CD8-positive, alpha-beta T cell (primary cell): ENCODE measurements at regions of chr1 and their contacts with region 1.

Region 1: GRCh38 chr1:204806943-204807687 is 63.5 kb upstream of the NFASC start:
- DNase-seq: peak; percentile 69 to 90 (median 83)
- ATAC-seq: peak; percentile 96
- H3K4me3 ChIP-seq: peak overlapping the region; percentile 53 to 59
- H3K4me3 Mint-ChIP-seq: peak overlapping the region; percentile 88
- H3K27ac ChIP-seq: no peak overlapping the region
- H3K27ac Mint-ChIP-seq: no peak overlapping the region
- H3K4me1 ChIP-seq: peaks cover 12% of the 10 kb centered on the region
- H3K4me1 Mint-ChIP-seq: peaks cover 20% of the 10 kb centered on the region
- H3K27me3 ChIP-seq: no peaks in the 10 kb centered on the region
- H3K27me3 Mint-ChIP-seq: no peaks in the 10 kb centered on the region
- CTCF ChIP-seq: peak; percentile 100

Region 2: DNA sequence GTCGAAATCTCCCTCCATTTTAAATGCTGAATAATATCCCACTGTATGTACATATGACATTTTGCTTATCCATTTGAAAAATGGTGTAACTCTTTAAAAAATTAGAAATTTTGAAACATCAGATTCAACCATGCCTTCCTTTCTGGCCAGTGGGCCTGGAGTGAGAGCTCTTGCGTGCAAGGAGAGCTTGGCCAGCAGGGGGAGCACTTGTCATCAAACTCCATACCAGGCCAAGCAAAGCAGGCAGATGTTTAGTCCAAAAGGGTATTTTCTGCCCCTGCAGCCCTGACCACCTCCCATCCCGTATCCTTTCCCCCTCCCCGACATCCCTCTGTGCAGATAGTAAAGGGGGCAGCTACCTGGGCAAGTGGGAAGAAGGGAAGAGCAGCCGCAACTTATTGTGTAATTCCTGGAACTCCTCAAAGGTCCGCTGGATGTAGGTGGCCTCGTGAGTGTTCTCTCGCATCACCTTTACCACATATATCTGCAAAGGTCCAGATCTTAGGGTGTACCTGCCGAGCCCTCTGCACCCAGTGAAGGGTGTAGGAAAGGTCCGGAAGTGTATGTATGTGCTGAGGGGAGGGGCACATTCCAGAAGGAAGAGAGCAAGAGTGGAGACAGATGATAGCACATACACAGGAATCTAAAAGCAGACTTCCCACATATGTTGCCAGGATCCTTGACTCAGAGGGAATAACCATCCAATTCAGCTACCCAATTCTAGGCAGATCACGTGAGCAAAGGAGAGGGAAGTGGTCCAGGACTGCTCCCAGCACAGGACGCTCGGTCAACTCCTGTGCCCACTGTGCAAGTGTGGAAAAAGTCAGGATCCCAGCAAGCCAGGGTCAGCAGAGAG is 375.6 kb before region 1 on chr1:
- CTCF ChIA-PET with region 1: no interaction called
- POLR2A ChIA-PET with region 1: no interaction called
- intact Hi-C with region 1: loop called (anchors 1 kb)
- DNase-seq: peak; percentile 65 to 87 (median 80)
- ATAC-seq: peak; percentile 77
- H3K4me3 ChIP-seq: no peak overlapping the region
- H3K4me3 Mint-ChIP-seq: no peak overlapping the region
- H3K27ac ChIP-seq: no peak overlapping the region
- H3K27ac Mint-ChIP-seq: no peak overlapping the region
- H3K4me1 ChIP-seq: no peaks in the 10 kb centered on the region
- H3K4me1 Mint-ChIP-seq: no peaks in the 10 kb centered on the region
- H3K27me3 ChIP-seq: no peaks in the 10 kb centered on the region
- H3K27me3 Mint-ChIP-seq: no peaks in the 10 kb centered on the region
- CTCF ChIP-seq: peak; percentile 97

Region 3: DNA sequence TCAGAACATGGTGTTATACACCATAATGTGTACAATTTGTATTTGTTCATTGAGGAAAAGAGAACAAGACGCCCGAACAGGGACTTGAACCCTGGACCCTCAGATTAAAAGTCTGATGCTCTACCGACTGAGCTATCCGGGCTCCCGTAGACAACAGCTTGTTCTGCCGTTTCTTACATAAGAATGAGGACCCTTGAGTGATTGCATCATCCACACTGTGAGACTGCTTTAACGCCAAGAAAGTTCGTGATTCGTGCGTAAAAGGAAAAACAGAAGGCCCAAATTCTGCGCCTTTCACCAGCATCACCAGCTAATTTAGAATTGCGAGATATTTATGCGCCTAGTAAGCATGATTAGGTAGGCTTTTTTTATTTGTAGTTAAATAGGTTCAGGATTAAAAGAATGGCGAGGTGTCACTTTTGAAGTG is 300.1 kb before region 1 on chr1:
- CTCF ChIA-PET with region 1: interaction called, 5 read pairs
- POLR2A ChIA-PET with region 1: no interaction called
- intact Hi-C with region 1: loop called in 1 of 2 experiments (anchors 5 kb)
- DNase-seq: peak; percentile 73 to 97 (median 85)
- ATAC-seq: peak; percentile 73
- H3K4me3 ChIP-seq: peak overlapping the region; percentile 39 to 64
- H3K4me3 Mint-ChIP-seq: peak overlapping the region; percentile 86
- H3K27ac ChIP-seq: peak overlapping the region; percentile 84 to 96
- H3K27ac Mint-ChIP-seq: peak overlapping the region; percentile 97
- H3K4me1 ChIP-seq: peaks cover 15% of the 10 kb centered on the region
- H3K4me1 Mint-ChIP-seq: peaks cover 33% of the 10 kb centered on the region
- H3K27me3 ChIP-seq: no peaks in the 10 kb centered on the region
- H3K27me3 Mint-ChIP-seq: no peaks in the 10 kb centered on the region
- CTCF ChIP-seq: no peak

Region 4: GRCh38 chr1:204713541-204713940 is 93.6 kb before region 1 on chr1:
- CTCF ChIA-PET with region 1: no interaction called
- POLR2A ChIA-PET with region 1: no interaction called
- intact Hi-C with region 1: no loop called
- DNase-seq: no peak
- ATAC-seq: no peak
- H3K4me3 ChIP-seq: no peak overlapping the region
- H3K4me3 Mint-ChIP-seq: no peak overlapping the region
- H3K27ac ChIP-seq: no peak overlapping the region
- H3K27ac Mint-ChIP-seq: no peak overlapping the region
- H3K4me1 ChIP-seq: no peaks in the 10 kb centered on the region
- H3K4me1 Mint-ChIP-seq: peaks cover 5% of the 10 kb centered on the region
- H3K27me3 ChIP-seq: peaks cover 0 to 2% of the 10 kb centered on the region in 2 experiments
- H3K27me3 Mint-ChIP-seq: peaks cover 7% of the 10 kb centered on the region
- CTCF ChIP-seq: no peak

Region 5: GRCh38 chr1:204763706-204764427 is 43.2 kb before region 1 on chr1:
- CTCF ChIA-PET with region 1: interaction called, 20 read pairs
- POLR2A ChIA-PET with region 1: no interaction called
- intact Hi-C with region 1: loop called in 1 of 2 experiments (anchors 1 kb)
- DNase-seq: peak; percentile 32 to 79 (median 65)
- ATAC-seq: peak; percentile 97
- H3K4me3 ChIP-seq: no peak overlapping the region
- H3K4me3 Mint-ChIP-seq: peak overlapping the region; percentile 22
- H3K27ac ChIP-seq: no peak overlapping the region
- H3K27ac Mint-ChIP-seq: no peak overlapping the region
- H3K4me1 ChIP-seq: peaks cover 9% of the 10 kb centered on the region
- H3K4me1 Mint-ChIP-seq: peaks cover 8% of the 10 kb centered on the region
- H3K27me3 ChIP-seq: no peaks in the 10 kb centered on the region
- H3K27me3 Mint-ChIP-seq: peaks cover 10% of the 10 kb centered on the region
- CTCF ChIP-seq: peak; percentile 85

Region 6: DNA sequence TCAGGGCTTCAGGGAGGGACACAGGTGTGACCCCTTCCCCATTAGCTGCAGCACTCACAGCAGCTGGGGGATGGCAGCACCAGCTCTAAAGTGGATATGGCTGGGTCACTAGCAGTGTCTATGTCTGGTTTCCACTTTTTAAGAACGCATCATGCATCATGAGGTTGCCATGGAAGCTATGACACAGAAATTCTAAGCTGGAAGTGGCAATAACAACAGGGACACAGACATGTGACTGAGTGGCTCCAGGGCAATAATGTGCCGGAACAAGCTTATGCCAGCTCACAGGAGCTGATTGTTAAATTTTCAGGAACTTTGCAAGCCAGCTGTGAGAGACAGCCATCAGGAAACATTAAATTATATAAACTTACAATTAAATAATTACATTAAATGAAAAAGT is 12.4 kb after region 1 on chr1:
- CTCF ChIA-PET with region 1: interaction called, 99 read pairs
- POLR2A ChIA-PET with region 1: no interaction called
- intact Hi-C with region 1: no loop called
- DNase-seq: no peak
- ATAC-seq: no peak
- H3K4me3 ChIP-seq: no peak overlapping the region
- H3K4me3 Mint-ChIP-seq: no peak overlapping the region
- H3K27ac ChIP-seq: no peak overlapping the region
- H3K27ac Mint-ChIP-seq: no peak overlapping the region
- H3K4me1 ChIP-seq: no peaks in the 10 kb centered on the region
- H3K4me1 Mint-ChIP-seq: no peaks in the 10 kb centered on the region
- H3K27me3 ChIP-seq: peaks cover 0 to 2% of the 10 kb centered on the region in 2 experiments
- H3K27me3 Mint-ChIP-seq: peaks cover 22% of the 10 kb centered on the region
- CTCF ChIP-seq: no peak